ENCODE measurements at regions of chr18 and their contacts with region 1.

Region 1: DNA sequence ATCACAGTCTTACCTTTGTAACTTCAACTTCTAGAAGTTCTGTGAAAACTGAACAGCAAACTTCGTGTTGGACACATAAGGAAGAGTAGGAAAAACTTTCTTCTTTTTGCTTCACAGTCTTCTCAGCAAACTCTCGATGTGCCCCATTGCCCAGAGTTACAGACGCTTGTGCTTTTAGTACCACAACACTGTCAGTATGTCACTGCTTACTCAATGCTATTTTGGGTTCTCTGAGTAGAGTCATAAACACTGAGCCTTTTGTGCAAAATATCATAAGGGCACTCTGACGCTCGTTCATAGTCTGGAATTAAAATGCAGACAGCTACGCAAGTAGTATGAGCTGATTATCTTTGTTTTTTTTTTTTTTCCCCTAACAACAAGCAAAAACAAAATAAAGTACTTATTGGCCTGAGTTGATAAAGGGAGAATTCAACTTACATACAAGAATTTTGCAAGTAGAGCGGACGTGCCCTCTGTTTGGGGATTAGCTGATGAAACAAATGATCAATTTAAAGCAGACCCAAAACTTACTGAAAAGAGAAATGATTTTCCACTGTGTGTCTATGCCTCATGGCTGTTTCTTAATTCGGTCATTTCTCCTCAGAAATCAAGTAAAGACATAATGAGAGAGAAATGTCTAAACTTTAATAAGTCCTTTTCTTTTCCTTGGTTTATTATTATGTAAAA is at the start of gene CDH19:
- DNase-seq: peak in 1 of 2 donors; percentile 16
- ATAC-seq: peak; percentile 47 to 95 (median 84)
- H3K4me3 ChIP-seq: peak within 1 kb of the TSS in 9 of 10 donors; percentile 12 to 47 (median 39)
- H3K27ac ChIP-seq: peak within 1 kb of the TSS in 8 of 10 donors; percentile 25 to 72 (median 64)
- H3K4me1 ChIP-seq: no peaks in the 10 kb centered on the region
- H3K27me3 ChIP-seq: no peaks in the 10 kb centered on the region
- CTCF ChIP-seq: no peak
- total RNA-seq, gene CDH19: 7.2 to 35.8 (median 12.6) TPM

Region 2: GRCh38 chr18:66682855-66683322 is 78.8 kb after region 1 on chr18:
- intact Hi-C with region 1: loop called in 1 of 10 experiments (anchors 2 kb)
- DNase-seq: peak in 1 of 2 donors; percentile 16
- ATAC-seq: peak; percentile 61 to 91 (median 80)
- H3K4me3 ChIP-seq: peak overlapping the region in 9 of 10 donors; percentile 0 to 46 (median 33)
- H3K27ac ChIP-seq: peak overlapping the region in 9 of 10 donors; percentile 18 to 77 (median 68)
- H3K4me1 ChIP-seq: peaks cover 0 to 10% (median 0%) of the 10 kb centered on the region in 9 donors
- H3K27me3 ChIP-seq: no peaks in the 10 kb centered on the region
- CTCF ChIP-seq: no peak

Region 3: DNA sequence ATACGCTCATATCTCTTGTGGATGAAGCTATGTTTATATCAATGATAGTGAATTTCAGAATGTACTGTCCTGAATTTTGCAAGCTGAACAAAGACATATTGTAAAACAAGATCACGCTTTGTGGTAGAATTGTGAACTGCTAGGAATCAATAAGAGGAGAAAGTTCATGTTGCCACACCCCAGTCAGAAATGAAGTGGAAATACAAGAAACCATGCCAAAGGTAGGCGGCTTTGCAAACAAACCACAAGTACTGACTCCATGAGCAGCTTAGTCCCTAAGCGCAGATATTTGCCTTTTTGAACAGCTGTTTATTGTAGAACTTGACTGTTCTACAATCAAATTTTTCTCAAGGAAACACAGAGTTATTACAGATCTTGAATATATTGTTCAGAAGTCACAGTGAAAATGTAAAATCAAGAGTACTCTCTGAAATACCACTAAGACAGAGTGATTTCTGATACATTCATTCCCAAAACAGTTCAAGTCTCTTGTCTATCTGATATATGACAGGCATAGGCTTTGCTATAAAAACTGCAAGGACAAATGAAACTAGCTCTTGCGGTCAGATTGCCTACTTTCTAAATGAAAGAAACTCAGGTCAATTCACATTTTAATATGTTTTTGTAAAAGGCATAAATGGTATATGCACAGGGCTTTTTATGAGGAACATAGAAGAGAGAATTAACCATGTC is 120.7 kb after region 1 on chr18:
- intact Hi-C with region 1: loop called in 1 of 10 experiments (anchors 10 kb)
- DNase-seq: peak in 1 of 2 donors; percentile 45
- ATAC-seq: peak; percentile 65 to 88 (median 82)
- H3K4me3 ChIP-seq: no peak overlapping the region
- H3K27ac ChIP-seq: peak overlapping the region in 9 of 10 donors; percentile 6 to 82 (median 64)
- H3K4me1 ChIP-seq: peaks cover 0 to 4% (median 0%) of the 10 kb centered on the region in 9 donors
- H3K27me3 ChIP-seq: no peaks in the 10 kb centered on the region
- CTCF ChIP-seq: no peak

Region 4: DNA sequence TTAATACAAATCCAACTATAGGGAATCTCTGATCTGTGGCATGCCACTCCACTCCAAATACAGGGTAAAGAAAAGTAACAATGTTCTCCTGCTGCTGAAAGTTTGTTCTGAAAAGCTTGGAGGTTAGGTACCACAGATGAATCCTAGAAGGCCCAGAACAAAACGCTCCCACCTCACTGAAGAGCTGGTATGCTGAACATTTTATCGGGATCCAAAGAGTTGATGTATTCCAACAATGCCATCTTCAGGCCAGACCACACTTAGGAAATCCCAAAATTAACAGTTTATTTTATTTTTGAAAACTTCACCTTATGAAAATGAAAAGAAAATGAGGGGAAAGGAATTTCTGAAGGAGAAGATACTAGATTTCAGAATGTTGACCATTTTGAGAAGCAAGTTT is 144.9 kb after region 1 on chr18:
- intact Hi-C with region 1: loop called in 1 of 10 experiments (anchors 10 kb)
- DNase-seq: no peak
- ATAC-seq: peak in 2 of 8 donors; percentile 58 to 68
- H3K4me3 ChIP-seq: no peak overlapping the region
- H3K27ac ChIP-seq: no peak overlapping the region
- H3K4me1 ChIP-seq: no peaks in the 10 kb centered on the region
- H3K27me3 ChIP-seq: no peaks in the 10 kb centered on the region
- CTCF ChIP-seq: peak in 7 of 9 donors; percentile 6 to 44 (median 33)